ENCODE measurements at regions of chr9 and their contacts with region 1.

Region 1: DNA sequence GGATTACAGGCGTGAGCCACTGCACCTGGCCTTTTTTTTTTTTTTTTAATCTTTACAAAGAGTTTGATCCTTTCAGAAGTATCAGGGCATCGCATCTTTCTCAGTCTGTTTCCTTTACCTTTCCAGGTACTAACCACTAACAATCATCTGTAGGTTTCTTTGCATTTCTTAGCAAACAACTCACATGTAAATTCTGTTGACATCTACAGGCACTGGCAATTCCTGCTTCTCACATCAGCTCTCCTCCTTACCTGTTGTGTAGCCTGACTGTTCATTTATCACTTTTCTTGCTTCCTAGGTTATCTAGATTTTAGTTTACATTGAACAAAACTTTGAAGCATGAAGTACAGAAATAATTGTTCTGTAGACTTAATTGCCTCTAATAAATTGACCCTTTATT is 27.5 kb upstream of the VPS13A start:
- DNase-seq: no peak
- H3K4me3 ChIP-seq: no peak overlapping the region
- H3K27ac ChIP-seq: no peak overlapping the region
- H3K4me1 ChIP-seq: no peaks in the 10 kb centered on the region
- H3K27me3 ChIP-seq: peaks cover 13% of the 10 kb centered on the region; the same call in 1 of the 2 replicates
- CTCF ChIP-seq: no peak

Region 2: DNA sequence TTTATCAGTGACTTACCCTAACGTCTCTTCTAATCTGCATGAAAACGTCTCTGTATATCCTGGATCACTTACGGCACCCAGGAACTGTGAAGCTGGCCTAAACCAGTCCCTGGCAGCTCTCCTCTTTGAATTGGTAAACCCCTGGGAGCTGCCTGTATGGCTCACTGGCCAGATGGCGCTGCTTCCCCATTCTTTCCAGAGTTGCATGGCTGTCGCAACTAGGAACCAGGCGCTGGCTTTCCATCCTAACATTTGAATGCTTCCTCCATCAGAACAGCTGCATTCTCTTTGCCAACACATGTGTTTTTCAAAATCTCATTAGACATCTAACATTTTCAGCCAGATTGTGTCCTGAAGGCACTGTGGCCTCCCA is 393.6 kb before region 1 on chr9:
- CTCF ChIA-PET with region 1: no interaction called
- POLR2A ChIA-PET with region 1: no interaction called
- intact Hi-C with region 1: loop called (anchors 5 kb)
- DNase-seq: peak in 1 of 2 experiments; percentile 25
- H3K4me3 ChIP-seq: no peak overlapping the region
- H3K27ac ChIP-seq: no peak overlapping the region
- H3K4me1 ChIP-seq: no peaks in the 10 kb centered on the region
- H3K27me3 ChIP-seq: peaks cover 59% of the 10 kb centered on the region
- CTCF ChIP-seq: no peak; the same call in 1 of the 2 replicates

Region 3: GRCh38 chr9:76810377-76810957 is 339.4 kb before region 1 on chr9:
- CTCF ChIA-PET with region 1: interaction called, 12 read pairs
- POLR2A ChIA-PET with region 1: no interaction called
- intact Hi-C with region 1: loop called (anchors 1 kb)
- DNase-seq: peak in 1 of 2 experiments; percentile 31
- H3K4me3 ChIP-seq: no peak overlapping the region
- H3K27ac ChIP-seq: no peak overlapping the region
- H3K4me1 ChIP-seq: no peaks in the 10 kb centered on the region
- H3K27me3 ChIP-seq: peaks cover 52% of the 10 kb centered on the region
- CTCF ChIP-seq: peak; percentile 89

Region 4: GRCh38 chr9:76996700-76997099 is 153.2 kb before region 1 on chr9:
- CTCF ChIA-PET with region 1: interaction called, 4 read pairs
- POLR2A ChIA-PET with region 1: no interaction called
- intact Hi-C with region 1: loop called (anchors 2 kb)
- DNase-seq: no peak
- H3K4me3 ChIP-seq: no peak overlapping the region
- H3K27ac ChIP-seq: no peak overlapping the region
- H3K4me1 ChIP-seq: no peaks in the 10 kb centered on the region
- H3K27me3 ChIP-seq: peaks cover 26% of the 10 kb centered on the region; the same call in 1 of the 2 replicates
- CTCF ChIP-seq: peak; percentile 51; the same call in 1 of the 2 replicates

Measured in PC-9 (cell line).